Sigmoid colon (tissue), 7 donors: ENCODE measurements at regions of chr6 and their contacts with region 1.

Region 1: GRCh38 chr6:41463062-41463930 is 82.9 kb upstream of the FOXP4 start:
- DNase-seq: peak; percentile 83
- H3K4me3 ChIP-seq: no peak overlapping the region
- H3K27ac ChIP-seq: no peak overlapping the region
- H3K4me1 ChIP-seq: no peaks in the 10 kb centered on the region
- H3K27me3 ChIP-seq: no peaks in the 10 kb centered on the region
- CTCF ChIP-seq: peak; percentile 12 to 62 (median 46)
- EP300 ChIP-seq: no peak
- POLR2A ChIP-seq: no peak

Region 2: DNA sequence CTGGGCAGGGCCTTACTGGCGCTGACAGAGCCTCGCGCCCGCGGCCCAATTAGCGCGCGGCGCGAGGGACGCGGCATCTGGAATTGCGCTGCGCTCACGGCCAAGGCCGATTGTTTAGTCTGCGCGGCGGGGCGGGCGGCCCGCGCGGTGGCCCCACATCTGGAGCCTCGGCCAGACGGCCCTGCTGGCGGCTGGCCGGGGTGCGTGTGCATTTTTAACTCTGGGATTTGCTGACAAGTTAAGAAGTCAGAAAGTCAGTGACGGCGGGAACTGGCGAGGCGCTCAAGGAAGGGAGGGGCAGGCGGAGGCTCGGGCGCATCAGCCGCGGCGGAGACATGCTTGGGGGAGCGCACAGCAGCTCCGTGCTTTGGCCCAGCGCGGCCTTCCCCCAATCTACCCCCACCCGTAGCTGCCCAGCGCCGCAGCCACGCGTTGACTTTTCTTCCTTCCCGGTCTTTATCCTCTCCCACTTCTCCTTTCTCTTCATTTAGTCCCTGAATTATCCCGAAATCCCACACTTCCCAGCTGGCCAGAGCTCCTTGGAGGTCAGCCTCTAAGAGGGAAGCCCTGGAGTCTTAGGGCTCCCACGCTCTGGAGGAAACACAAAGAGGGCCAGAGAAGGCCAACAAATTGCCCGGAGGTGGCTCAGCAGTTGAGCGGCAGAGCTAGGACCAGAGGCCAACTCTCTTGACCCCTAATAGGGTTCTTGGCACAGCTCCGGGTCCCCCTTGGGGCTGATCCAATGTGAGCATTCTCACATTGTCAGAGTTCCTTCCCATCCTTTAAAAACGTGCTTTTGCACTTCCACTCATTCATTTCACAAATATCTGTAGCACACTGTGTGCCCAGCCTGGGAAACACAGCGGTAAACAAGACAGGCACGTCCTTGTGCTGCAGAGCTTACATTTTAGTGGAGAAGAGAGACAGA is 42.1 kb after region 1 on chr6:
- intact Hi-C with region 1: loop called (anchors 5 kb)
- DNase-seq: peak; percentile 95
- H3K4me3 ChIP-seq: peak overlapping the region; percentile 14 to 49 (median 38)
- H3K27ac ChIP-seq: peak overlapping the region; percentile 73 to 91 (median 76)
- H3K4me1 ChIP-seq: peaks cover 0 to 51% (median 33%) of the 10 kb centered on the region in 4 donors
- H3K27me3 ChIP-seq: no peaks in the 10 kb centered on the region
- CTCF ChIP-seq: no peak
- EP300 ChIP-seq: no peak
- POLR2A ChIP-seq: no peak

Region 3: GRCh38 chr6:41591859-41592502 is 128.7 kb after region 1 on chr6:
- intact Hi-C with region 1: loop called (anchors 1 kb)
- DNase-seq: peak; percentile 86
- H3K4me3 ChIP-seq: no peak overlapping the region
- H3K27ac ChIP-seq: no peak overlapping the region
- H3K4me1 ChIP-seq: no peaks in the 10 kb centered on the region
- H3K27me3 ChIP-seq: no peaks in the 10 kb centered on the region
- CTCF ChIP-seq: peak; percentile 90 to 95 (median 92)
- EP300 ChIP-seq: no peak
- POLR2A ChIP-seq: no peak

Region 4: DNA sequence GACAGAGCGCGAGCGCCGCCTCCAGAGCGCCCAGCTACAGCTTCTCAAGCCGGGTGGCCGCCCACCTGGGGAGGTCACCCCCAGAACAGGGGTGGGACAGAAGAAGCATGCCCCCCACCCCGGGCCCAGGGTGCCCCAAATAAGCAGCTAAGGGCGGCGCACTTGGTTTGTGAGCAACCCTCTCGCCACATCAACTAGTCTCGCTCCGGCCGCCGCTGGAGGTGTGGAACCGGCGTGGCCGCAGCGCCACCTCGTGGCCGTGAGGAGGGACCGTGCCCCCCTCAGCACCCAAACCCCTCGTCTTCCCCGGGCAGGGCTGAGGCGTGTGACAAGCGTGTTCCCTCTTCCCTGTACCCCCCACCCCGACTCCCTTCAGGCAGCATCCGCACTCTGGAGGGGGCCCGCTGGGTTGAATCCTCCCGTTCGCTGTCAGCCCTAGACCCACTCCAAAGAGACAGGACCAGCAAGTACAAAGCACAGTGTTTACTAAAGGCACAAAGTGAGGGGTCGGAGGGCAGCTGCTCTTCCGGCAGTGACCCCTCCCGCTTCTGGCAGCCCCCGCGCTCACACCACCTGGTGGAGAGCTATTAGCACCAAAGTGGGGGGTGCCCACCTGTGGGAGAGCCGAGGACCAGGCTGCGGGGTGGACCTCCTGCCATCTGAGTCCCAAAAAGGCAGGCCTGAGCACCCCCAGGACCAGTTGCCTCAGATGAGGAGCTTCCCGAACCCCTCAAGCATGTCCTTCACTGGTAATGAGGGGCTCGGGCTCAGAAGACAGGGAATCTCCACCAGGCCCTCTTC is 220.4 kb after region 1 on chr6:
- intact Hi-C with region 1: loop called (anchors 5 kb)
- DNase-seq: peak; percentile 90
- H3K4me3 ChIP-seq: peak overlapping the region; percentile 30 to 50 (median 46)
- H3K27ac ChIP-seq: peak overlapping the region; percentile 57 to 70 (median 62)
- H3K4me1 ChIP-seq: peaks cover 0 to 26% (median 22%) of the 10 kb centered on the region in 4 donors
- H3K27me3 ChIP-seq: no peaks in the 10 kb centered on the region
- CTCF ChIP-seq: peak; percentile 83 to 90 (median 89)
- EP300 ChIP-seq: no peak
- POLR2A ChIP-seq: no peak